HCT116 (cell line): ENCODE measurements at regions of chr12 and their contacts with region 1.

Region 1: GRCh38 chr12:10033783-10034545 is 3.5 kb downstream of the CLEC9A start:
- DNase-seq: no peak
- ATAC-seq: 0 out of 2 replicates have a peak, but pooled peaks have one; percentile 25
- H3K4me3 ChIP-seq: no peak overlapping the region
- H3K27ac ChIP-seq: no peak overlapping the region
- H3K4me1 ChIP-seq: no peaks in the 10 kb centered on the region
- H3K27me3 ChIP-seq: peaks cover 6% of the 10 kb centered on the region
- CTCF ChIP-seq: peak; percentile 4 to 55 (median 51); a peak in 5 of 6 replicates
- POLR2A ChIP-seq: no peak
- RAD21 ChIP-seq: peak; percentile 60

Region 2: GRCh38 chr12:10001171-10001776 is 32.7 kb before region 1 on chr12:
- CTCF ChIA-PET with region 1: no interaction called
- POLR2A ChIA-PET with region 1: no interaction called
- RAD21 ChIA-PET with region 1: interaction called in 1 of 2 experiments, 3 read pairs
- intact Hi-C with region 1: loop called (anchors 1 kb)
- DNase-seq: no peak
- ATAC-seq: no peak
- H3K4me3 ChIP-seq: no peak overlapping the region
- H3K27ac ChIP-seq: no peak overlapping the region
- H3K4me1 ChIP-seq: no peaks in the 10 kb centered on the region
- H3K27me3 ChIP-seq: peaks cover 28% of the 10 kb centered on the region
- CTCF ChIP-seq: no peak
- POLR2A ChIP-seq: no peak
- RAD21 ChIP-seq: no peak

Region 3: GRCh38 chr12:10016881-10017280 is 17.1 kb before region 1 on chr12:
- CTCF ChIA-PET with region 1: no interaction called
- POLR2A ChIA-PET with region 1: no interaction called
- RAD21 ChIA-PET with region 1: no interaction called
- intact Hi-C with region 1: no loop called
- DNase-seq: no peak
- ATAC-seq: no peak
- H3K4me3 ChIP-seq: no peak overlapping the region
- H3K27ac ChIP-seq: no peak overlapping the region
- H3K4me1 ChIP-seq: no peaks in the 10 kb centered on the region
- H3K27me3 ChIP-seq: peaks cover 32% of the 10 kb centered on the region
- CTCF ChIP-seq: no peak
- POLR2A ChIP-seq: no peak
- RAD21 ChIP-seq: no peak

Region 4: DNA sequence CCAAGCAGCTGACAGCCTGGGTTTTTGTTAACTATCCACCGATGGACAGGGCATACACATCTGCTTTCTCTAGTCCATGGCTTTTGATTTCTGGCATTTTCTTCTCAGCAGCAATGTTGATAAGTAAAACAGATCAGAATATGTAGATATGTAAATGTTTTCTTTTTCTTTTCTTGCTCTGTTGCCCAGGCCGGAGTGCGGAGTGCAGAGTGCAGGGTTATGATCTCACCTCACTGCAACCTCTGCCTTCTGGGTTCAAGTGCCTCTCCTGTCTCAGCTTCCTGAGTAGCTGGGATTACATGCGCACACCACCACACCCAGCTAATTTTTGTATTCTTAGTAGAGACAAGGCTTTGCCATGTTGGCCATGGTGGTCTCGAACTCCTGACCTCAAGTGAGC is 24.4 kb after region 1 on chr12:
- CTCF ChIA-PET with region 1: no interaction called
- POLR2A ChIA-PET with region 1: no interaction called
- RAD21 ChIA-PET with region 1: no interaction called
- intact Hi-C with region 1: no loop called
- DNase-seq: no peak
- ATAC-seq: no peak
- H3K4me3 ChIP-seq: no peak overlapping the region
- H3K27ac ChIP-seq: no peak overlapping the region
- H3K4me1 ChIP-seq: no peaks in the 10 kb centered on the region
- H3K27me3 ChIP-seq: peaks cover 69% of the 10 kb centered on the region
- CTCF ChIP-seq: no peak
- POLR2A ChIP-seq: no peak
- RAD21 ChIP-seq: no peak

Region 5: DNA sequence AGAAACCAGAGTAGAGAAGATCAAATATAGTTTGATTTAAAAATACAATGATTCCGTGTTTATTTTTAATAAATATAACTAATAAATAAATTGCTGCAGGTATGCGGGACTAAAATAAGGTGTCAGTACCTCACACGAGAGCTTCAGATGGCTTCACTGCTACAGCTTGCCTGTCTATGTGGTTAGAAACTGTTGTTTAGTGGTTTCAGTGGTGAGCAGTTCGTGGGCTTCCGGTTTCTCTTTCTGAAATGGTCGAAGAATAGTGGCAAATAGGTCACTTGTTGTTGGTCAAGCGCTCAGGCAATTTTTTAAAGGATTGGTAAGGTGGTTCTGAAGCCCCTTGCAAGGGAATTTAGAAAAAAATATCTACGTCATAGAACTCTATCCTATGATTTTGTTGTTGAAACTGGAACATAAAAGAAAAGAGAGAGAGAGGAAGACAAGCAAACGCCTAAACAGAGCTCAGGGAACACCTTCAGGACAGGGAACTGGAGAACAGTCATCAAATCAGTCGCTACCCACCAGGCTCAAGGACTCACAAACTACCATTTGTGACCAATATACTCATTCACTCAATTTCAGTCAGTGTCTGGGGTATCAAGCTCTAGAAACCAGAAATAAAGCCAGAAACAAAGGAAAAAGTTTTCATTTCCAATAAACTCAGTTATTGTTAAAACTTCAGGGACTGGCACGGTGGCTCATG is 210.0 kb after region 1 on chr12:
- CTCF ChIA-PET with region 1: no interaction called
- POLR2A ChIA-PET with region 1: no interaction called
- RAD21 ChIA-PET with region 1: no interaction called
- intact Hi-C with region 1: no loop called
- DNase-seq: no peak
- ATAC-seq: no peak
- H3K4me3 ChIP-seq: no peak overlapping the region
- H3K27ac ChIP-seq: no peak overlapping the region
- H3K4me1 ChIP-seq: no peaks in the 10 kb centered on the region
- H3K27me3 ChIP-seq: no peaks in the 10 kb centered on the region
- CTCF ChIP-seq: no peak
- POLR2A ChIP-seq: no peak
- RAD21 ChIP-seq: no peak

Region 6: DNA sequence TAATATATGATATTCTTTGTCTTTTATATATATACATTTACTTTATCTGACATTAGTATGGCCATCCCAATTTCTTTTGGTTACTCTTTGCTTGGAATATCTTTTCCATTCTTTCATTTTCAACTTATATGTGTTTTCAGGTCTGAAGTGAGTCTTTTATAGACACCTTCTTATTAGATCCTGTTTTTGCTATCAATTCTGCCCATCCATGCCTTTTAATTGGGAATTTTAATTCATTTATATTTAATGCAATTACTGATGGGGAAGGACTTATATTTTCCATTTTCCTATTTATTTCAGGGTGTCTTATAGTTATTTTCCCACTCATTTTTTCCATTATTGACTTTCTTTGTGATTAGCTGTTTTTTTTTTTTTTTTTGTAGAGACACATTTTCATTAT is 222.1 kb after region 1 on chr12:
- CTCF ChIA-PET with region 1: no interaction called
- POLR2A ChIA-PET with region 1: no interaction called
- RAD21 ChIA-PET with region 1: no interaction called
- intact Hi-C with region 1: no loop called
- DNase-seq: no peak
- ATAC-seq: no peak
- H3K4me3 ChIP-seq: no peak overlapping the region
- H3K27ac ChIP-seq: no peak overlapping the region
- H3K4me1 ChIP-seq: no peaks in the 10 kb centered on the region
- H3K27me3 ChIP-seq: no peaks in the 10 kb centered on the region
- CTCF ChIP-seq: no peak
- POLR2A ChIP-seq: no peak
- RAD21 ChIP-seq: no peak

Region 7: DNA sequence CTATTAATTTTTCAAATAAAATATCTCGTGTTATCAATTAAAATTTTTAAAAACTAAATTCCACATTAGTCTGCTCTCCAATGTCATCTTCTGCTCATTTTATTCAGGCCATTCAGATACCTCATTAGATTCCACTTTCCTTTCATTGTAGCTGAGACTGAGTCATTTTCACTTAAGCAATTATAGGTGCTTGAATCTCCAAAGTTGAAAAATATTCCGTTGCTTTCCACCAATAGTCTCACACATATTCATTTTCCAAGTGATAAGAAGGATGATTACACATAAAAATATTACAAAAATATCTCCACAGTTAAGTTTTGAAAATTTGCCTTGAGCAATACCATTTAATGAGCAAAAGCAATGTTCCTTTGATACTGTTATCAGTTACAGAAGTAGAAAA is 725.7 kb after region 1 on chr12:
- CTCF ChIA-PET with region 1: no interaction called
- POLR2A ChIA-PET with region 1: no interaction called
- RAD21 ChIA-PET with region 1: no interaction called
- intact Hi-C with region 1: loop called (anchors 10 kb)
- DNase-seq: no peak
- ATAC-seq: no peak
- H3K4me3 ChIP-seq: no peak overlapping the region
- H3K27ac ChIP-seq: no peak overlapping the region
- H3K4me1 ChIP-seq: no peaks in the 10 kb centered on the region
- H3K27me3 ChIP-seq: no peaks in the 10 kb centered on the region
- CTCF ChIP-seq: no peak
- POLR2A ChIP-seq: no peak
- RAD21 ChIP-seq: no peak